RWPE1 (cell line): ENCODE measurements at regions of chr2 and their contacts with region 1.

Region 1: DNA sequence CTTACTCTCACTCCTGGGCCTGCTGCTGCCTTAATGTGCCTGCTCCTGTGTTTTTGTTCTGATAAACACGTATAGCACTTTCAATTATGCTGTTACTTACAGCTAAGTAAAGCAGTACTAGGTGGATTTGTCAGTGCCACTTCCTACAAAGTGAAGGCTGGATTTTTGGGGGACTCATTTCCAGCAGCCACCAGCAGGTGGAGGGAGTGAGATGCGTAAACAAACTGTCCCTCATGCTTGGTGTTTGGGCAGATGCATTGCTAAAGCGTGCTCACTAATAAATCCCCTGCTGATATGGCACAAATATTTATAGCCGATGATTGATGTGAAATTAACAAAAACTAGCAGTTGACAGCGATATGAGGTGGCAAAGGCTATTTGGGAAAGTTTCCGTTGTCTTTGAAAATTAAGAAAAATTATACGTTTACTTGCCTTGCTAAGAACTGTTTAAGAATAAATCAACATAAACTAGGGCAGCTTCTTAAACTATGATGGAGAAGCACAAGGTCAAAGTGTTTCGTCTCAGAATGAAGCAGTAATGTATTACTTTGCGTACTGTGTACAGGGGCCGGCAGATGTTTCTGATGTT is 101.7 kb downstream of the AGAP1 start:
- DNase-seq: peak; percentile 67
- H3K27ac ChIP-seq: no peak overlapping the region
- CTCF ChIP-seq: peak; percentile 85

Region 2: DNA sequence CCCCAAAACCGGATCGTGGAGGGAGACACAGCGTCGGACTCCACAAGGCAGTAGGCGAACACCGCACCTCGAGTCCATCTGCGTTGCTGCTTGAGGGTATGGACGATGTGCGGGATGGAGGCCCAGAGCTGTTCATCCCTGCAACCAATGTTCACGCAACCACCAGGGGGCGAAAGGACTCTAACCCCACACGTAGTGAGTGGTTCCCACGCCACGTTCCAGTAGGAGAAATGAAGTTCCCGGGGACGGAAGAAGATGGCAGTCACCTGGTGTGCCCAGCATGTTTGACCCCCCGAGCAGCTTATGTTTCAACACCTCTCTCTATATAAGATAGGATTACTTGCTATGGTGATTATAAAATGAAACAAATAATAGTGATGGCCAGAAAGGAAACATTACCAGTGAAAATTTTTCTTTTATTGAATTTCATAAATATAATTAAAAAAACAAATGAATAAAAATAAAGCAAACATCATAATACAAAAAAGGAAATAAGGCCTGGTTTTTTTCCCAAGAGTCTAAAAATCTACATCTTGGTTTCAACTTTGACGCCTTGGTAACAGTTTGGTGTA is 459.4 kb before region 1 on chr2:
- CTCF ChIA-PET with region 1: interaction called, 32 read pairs
- POLR2A ChIA-PET with region 1: no interaction called
- DNase-seq: peak; percentile 77
- H3K27ac ChIP-seq: no peak overlapping the region
- CTCF ChIP-seq: peak; percentile 75

Region 3: GRCh38 chr2:235433860-235434259 is 161.7 kb before region 1 on chr2:
- CTCF ChIA-PET with region 1: interaction called, 10 read pairs
- POLR2A ChIA-PET with region 1: no interaction called
- DNase-seq: no peak
- H3K27ac ChIP-seq: no peak overlapping the region
- CTCF ChIP-seq: no peak

Region 4: DNA sequence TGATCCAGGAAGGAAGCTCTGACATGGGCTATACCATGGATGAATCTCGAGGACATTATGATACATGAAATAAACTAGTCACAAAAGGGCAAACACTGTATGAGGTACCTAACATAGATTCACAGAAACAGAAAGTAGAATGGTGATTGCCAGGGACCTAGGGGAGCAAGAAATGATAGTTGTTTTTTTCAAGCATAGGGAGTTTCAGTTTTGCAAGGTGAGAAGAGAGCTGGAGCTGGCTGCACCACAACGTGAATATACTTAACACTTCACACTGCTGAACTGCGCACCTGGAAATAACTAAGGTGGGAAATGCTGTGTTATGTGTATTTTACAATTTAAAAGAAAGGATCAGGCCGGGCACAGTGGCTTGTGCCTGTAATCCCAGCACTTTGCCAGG is 114.9 kb before region 1 on chr2:
- CTCF ChIA-PET with region 1: no interaction called
- POLR2A ChIA-PET with region 1: no interaction called
- DNase-seq: no peak
- H3K27ac ChIP-seq: no peak overlapping the region
- CTCF ChIP-seq: no peak

Region 5: DNA sequence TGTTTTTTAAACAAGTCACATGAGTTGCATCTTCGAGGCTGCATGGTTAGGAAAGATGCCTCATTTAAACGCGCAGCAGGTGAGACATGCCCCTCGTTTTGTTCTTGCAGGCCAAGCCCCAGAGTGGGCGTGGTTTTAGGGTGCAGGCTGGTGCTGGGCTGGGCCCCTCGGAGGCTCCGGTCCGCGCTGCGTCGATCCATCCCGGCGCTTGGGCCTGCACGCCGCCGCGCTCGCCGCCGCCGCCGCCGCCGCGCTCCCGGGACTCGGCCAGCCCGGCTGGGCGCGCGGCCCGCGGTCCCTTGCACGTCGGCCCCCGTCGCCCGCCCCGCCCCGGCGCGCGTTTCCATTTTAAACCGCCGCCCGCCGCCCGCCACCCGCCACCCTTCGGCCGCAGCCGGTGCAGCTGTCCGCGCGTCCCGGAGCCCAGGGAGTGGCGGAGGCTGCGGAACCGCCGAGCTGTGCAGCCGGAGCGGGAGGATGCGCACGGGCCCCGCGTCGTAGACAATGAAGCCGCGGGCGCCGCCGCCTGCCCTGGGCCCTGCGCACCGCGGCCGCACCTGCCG is 73.8 kb after region 1 on chr2:
- CTCF ChIA-PET with region 1: interaction called, 10 read pairs
- POLR2A ChIA-PET with region 1: no interaction called
- DNase-seq: peak; percentile 49
- H3K27ac ChIP-seq: peak overlapping the region; percentile 52
- CTCF ChIP-seq: no peak

Region 6: GRCh38 chr2:235685024-235685721 is 89.7 kb after region 1 on chr2:
- CTCF ChIA-PET with region 1: no interaction called
- POLR2A ChIA-PET with region 1: no interaction called
- DNase-seq: no peak
- H3K27ac ChIP-seq: peak overlapping the region; percentile 28
- CTCF ChIP-seq: no peak

Region 7: DNA sequence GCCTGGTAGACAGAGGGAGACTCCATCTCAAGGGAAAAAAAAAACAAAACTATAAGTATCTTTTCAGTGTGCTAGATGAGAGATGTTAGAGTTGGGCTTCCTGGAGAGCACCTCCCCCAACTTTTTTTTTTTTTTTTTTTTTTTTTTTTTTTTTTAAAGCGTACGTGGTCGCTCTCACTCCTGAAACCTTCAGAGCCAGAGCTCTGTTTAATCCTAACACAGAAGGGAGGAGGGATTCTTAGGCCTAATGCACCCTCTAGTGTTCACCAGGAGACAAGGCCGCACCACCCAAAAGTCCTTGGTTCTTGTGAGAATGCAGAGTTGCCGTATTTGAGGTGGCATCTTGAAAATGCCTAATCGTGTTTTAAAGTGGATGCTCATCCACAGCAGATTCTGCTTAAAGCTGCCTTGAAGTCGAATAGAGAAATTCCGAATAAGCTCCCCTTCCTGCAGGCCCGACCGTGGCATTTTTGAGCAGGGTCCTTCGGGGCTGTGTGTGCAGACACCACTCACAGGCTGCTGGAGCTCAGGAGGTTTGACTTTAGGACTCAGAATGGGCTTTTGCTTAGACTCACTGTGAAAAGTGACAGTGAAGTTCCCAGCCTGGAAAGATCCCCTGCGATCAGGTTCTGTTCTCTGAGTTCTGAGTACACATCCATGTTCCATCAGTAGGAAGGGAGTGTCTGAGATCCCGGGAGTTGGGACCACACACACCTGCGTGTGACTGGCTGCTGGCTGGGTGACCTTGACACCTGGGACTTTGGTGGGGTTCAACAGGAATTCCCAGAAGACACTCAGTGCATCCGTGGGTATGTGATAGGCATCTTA is 151.0 kb after region 1 on chr2:
- CTCF ChIA-PET with region 1: interaction called, 67 read pairs
- POLR2A ChIA-PET with region 1: no interaction called
- DNase-seq: peak; percentile 79
- H3K27ac ChIP-seq: peak overlapping the region; percentile 87
- CTCF ChIP-seq: peak; percentile 77